GM13976 (cell line): ENCODE measurements at regions of chr12 and their contacts with region 1.

Region 1: DNA sequence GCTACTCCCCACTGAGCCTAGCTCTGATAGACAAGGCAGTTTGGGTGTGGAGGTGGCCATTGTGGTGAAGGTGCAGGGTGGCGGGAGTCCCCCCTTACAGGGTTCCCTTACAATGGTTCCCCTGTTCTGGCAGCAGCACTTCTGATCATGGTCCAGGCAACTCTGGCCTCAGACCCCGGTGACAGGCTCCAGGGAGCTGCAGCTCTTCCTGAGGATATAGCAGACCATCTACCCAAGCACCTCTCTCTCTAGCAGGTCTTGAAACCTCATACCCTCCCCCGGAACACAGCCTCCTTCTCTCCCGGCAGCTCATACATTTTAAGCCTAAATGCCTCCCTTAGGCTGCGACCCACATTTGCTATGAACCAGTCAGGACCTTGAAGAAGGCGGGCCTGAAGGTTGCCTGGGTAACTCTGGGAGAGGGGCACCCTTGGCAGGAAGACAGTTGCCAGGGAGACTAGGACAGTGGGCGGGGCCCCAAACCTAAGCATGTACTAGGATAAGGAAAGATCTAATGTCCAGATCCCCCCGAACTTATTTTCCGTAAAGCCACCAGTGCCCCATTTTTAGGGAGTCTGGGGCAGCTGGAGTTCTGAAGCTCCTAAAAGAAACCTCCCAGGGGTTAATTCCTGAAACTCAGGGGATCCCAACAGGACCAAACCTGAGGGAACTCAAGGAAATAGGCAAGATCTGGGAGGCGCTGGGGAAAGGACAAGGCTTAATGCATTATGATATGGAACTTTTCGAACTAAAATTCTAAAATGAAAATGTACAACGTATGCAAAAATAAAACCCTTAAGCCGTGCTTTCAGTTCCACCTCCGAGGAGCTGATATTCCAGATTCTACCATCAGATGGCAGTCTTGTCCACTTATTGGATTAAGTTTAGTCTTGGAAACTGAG is 4.5 kb upstream of the GDF11 start:
- DNase-seq: peak; percentile 78
- CTCF ChIP-seq: peak; percentile 66

Region 2: GRCh38 chr12:55385911-55386310 is 352.5 kb before region 1 on chr12:
- in situ Hi-C with region 1: no loop called
- DNase-seq: no peak
- CTCF ChIP-seq: no peak

Region 3: DNA sequence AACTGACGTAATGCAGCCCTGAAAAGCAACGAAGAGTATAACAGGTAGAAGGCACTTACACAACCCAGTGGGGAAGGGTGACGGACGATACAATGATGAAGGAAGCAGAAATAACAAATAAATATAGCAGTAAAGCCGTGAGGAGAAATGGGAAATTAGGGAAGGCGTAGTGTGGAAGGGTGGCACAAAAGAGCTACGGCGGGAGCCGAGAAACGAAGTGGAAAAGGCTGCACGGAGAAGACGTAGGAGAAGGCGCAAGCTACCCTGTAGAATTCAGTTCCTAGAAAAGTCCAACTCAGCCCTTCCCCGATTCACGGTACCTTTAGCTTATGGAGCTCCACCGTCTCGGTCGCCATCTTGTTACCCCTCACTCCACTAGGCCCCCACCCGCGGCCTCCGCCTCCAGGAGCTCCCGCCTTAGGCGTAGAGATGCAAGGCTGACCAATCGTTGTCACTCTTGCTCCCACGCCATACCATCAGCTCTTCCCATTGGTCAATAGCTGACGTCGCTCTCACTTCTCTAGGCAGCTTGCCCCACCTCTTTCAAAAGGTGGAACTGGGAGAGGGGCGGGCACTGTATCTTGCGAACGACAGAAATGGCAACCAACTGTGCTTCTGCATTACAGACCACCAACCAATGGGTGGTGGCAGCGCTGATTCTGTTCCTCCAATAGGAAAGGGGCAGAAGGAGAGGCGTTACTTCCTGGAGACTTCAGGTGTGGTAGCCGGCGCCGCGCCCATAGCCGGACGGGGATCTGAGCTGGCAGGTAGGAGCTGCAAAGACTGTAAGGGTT is 79.2 kb after region 1 on chr12 and contains the starts of genes ORMDL2 and SARNP:
- in situ Hi-C with region 1: no loop called
- DNase-seq: peak; percentile 94
- CTCF ChIP-seq: no peak

Region 4: DNA sequence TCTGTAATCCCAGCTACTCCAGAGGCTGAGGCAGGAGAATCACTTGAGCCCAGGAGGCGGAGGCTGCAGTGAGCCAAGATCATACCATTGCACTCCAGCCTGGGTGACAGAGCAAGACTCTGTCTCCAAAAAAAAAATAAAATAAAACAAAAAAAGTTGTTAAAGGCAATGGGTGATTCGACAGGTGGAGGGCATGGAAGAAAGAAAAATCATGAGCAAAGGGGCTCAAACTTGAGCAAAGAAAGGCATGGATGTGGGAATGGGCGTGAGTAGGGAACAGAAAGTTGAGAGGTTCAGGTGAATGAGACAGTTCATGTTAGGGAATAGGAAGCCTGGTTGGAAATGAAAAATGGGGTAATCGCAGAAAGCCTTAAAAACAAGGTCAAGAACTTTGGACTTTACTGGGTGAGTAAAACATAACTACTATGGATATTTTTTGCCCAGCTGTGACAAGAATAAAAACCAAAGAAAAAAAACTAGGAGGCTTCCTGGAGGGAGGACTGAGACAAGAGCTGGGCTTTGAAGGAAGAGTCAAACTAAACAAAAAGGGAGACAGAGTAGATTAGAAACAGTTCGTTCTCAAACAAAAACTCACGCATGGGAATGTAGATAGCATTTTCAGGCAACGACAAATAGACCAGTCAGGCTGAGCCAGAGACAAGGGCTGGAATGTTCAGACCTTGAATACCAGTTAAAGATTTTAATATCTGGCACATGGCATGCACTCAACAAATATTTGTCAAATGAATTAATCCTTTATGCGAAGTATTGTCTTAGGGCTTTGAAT is 170.5 kb after region 1 on chr12:
- in situ Hi-C with region 1: no loop called
- DNase-seq: no peak
- CTCF ChIP-seq: no peak

Region 5: DNA sequence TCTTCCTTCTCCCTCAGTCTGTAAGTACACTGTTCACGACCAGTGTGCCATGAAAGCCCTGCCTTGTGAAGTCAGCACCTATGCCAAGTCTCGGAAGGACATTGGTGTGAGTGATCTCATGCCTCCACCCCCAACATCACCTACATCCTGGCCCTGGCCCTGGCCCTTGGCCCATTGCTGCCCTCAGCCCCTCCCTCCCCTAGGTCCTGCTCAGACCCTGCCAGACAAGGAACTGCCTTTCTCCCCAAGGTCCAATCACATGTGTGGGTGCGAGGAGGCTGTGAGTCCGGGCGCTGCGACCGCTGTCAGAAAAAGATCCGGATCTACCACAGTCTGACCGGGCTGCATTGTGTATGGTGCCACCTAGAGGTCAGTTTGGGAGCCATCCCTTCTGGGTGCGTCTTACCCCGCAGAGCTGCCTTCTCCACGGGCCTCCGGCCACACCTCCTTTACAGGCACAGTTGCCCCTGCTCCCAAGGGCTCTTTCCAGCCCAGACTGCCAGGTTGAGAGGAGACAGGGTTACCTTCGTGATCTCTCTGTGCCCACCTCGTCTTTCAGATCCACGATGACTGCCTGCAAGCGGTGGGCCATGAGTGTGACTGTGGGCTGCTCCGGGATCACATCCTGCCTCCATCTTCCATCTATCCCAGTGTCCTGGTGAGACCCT is 201.8 kb after region 1 on chr12:
- in situ Hi-C with region 1: loop called (anchors 10 kb)
- DNase-seq: peak; percentile 86
- CTCF ChIP-seq: peak; percentile 87

Region 6: DNA sequence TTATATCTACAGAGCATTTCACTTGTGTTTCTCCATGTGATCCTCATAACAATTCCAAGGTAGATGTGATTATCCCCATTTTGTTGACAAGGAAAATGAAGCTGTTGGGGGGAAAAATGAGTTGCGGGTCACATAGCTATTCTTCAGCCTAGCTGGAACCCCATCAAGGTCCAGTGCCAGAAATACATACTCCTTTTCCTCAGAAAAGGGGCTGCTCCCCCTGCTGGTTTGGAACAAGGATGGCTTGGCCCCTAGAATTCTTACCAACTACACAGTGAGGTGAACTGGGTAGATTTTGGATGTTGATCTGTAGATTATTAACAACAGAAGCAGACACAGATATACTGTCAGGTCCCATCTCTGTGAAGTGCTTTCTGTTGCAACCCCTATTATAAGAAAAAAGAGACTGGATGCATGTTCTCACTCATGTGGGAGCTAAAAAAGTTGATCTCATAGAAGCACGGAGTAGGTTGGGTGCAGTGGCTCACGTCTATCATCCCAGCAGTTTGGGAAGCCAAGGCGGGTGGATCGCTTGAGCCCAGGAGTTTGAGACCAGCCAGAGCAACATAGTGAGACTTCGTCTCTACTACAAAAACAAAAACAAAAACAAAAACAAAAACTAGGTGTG is 291.4 kb after region 1 on chr12:
- in situ Hi-C with region 1: loop called (anchors 10 kb)
- DNase-seq: peak; percentile 66
- CTCF ChIP-seq: peak; percentile 67